Caco-2 (cell line): ENCODE measurements at regions of chr3 and their contacts with region 1.

Region 1: GRCh38 chr3:166013073-166013679 is 176.0 kb upstream of the BCHE start:
- DNase-seq: peak in 1 of 2 experiments; percentile 48
- H3K4me3 ChIP-seq: no peak overlapping the region
- H3K4me3 Mint-ChIP-seq: no peak overlapping the region
- H3K27ac Mint-ChIP-seq: no peak overlapping the region
- H3K4me1 ChIP-seq: no peaks in the 10 kb centered on the region
- H3K4me1 Mint-ChIP-seq: no peaks in the 10 kb centered on the region
- H3K27me3 ChIP-seq: no peaks in the 10 kb centered on the region
- H3K27me3 Mint-ChIP-seq: no peaks in the 10 kb centered on the region
- CTCF ChIP-seq: peak; percentile 43

Region 2: DNA sequence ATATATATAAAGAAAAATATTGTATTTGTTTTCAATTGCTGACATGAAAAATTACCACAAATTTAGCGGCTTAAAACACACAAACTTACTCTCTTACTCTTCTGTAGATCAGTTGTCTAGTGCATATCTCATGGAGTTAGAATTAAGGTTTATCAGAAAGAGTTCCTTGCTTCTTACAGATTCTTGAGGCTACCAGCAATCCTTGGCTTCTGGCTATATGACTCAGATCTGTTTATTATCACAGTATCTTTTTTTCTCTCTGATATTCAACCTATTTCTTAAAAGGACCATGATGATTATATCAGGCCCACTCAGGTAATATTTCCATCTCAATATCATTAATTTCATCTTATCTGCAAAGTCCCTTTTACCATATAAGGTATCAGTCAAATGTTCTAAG is 87.5 kb after region 1 on chr3:
- CTCF ChIA-PET with region 1: no interaction called
- POLR2A ChIA-PET with region 1: no interaction called
- intact Hi-C with region 1: no loop called
- DNase-seq: no peak
- H3K4me3 ChIP-seq: no peak overlapping the region
- H3K4me3 Mint-ChIP-seq: no peak overlapping the region
- H3K27ac Mint-ChIP-seq: no peak overlapping the region
- H3K4me1 ChIP-seq: no peaks in the 10 kb centered on the region
- H3K4me1 Mint-ChIP-seq: no peaks in the 10 kb centered on the region
- H3K27me3 ChIP-seq: no peaks in the 10 kb centered on the region
- H3K27me3 Mint-ChIP-seq: no peaks in the 10 kb centered on the region
- CTCF ChIP-seq: no peak

Region 3: DNA sequence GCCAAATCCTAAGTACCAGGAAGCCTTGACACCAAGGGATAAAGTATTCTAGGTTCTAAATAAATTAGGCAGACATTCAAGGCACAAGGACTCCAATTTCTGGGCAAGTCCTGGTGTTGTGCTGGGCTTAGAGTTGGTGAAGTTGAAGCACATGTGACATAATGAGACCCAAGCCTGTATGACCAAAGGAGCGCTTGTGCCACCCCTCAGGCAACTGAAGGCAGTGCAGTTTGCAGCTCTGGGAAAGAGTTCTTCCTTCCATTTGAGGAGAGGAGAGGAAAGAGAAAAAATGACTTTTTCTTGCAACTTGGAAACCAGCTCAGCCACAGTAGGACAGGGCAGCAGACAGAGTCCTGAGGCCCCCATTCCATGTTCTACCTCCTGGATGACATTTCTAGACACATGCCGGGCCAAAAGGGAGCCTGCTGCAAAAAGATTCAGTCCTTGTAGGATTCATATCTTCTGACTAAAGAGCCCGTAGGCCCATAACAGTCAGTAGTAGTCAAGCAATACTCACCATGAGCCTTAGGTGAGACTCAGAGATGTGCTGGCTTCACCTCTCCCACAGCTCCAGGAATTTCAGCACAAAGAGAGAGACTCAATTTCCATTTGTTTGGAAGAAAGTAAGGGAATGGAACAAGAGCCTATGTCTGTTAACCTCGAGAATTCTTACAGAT is 412.9 kb after region 1 on chr3:
- CTCF ChIA-PET with region 1: no interaction called
- POLR2A ChIA-PET with region 1: no interaction called
- intact Hi-C with region 1: loop called (anchors 1 kb)
- DNase-seq: peak in 1 of 2 experiments; percentile 32
- H3K4me3 ChIP-seq: no peak overlapping the region
- H3K4me3 Mint-ChIP-seq: no peak overlapping the region
- H3K27ac Mint-ChIP-seq: no peak overlapping the region
- H3K4me1 ChIP-seq: no peaks in the 10 kb centered on the region
- H3K4me1 Mint-ChIP-seq: no peaks in the 10 kb centered on the region
- H3K27me3 ChIP-seq: no peaks in the 10 kb centered on the region
- H3K27me3 Mint-ChIP-seq: no peaks in the 10 kb centered on the region
- CTCF ChIP-seq: peak in 1 of 2 experiments; percentile 36